BJ (cell line): ENCODE measurements at regions of chr13 and their contacts with region 1.

Region 1: DNA sequence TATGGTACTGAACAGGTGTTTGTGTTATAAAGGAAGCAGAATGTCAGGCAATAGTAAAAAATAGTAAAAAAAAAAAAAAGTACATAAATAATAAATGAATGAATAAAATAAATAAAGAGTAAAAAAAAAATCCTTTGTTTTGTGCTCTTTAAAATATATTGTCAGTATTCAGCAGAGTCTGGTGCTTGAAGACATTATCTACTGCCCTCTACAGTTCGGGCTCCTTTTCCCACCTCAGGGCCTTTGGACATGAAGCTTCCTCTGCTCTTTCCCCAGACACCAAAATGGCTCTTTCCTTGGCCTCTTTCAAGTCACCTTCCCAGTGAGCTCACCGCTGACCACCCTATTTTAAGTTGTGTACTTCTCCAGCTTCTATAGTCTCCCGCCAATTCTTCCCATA is 137.5 kb downstream of the TNFRSF19 start:
- DNase-seq: no peak
- H3K4me3 ChIP-seq: no peak overlapping the region
- H3K27me3 ChIP-seq: no peaks in the 10 kb centered on the region
- CTCF ChIP-seq: peak; percentile 43

Region 2: DNA sequence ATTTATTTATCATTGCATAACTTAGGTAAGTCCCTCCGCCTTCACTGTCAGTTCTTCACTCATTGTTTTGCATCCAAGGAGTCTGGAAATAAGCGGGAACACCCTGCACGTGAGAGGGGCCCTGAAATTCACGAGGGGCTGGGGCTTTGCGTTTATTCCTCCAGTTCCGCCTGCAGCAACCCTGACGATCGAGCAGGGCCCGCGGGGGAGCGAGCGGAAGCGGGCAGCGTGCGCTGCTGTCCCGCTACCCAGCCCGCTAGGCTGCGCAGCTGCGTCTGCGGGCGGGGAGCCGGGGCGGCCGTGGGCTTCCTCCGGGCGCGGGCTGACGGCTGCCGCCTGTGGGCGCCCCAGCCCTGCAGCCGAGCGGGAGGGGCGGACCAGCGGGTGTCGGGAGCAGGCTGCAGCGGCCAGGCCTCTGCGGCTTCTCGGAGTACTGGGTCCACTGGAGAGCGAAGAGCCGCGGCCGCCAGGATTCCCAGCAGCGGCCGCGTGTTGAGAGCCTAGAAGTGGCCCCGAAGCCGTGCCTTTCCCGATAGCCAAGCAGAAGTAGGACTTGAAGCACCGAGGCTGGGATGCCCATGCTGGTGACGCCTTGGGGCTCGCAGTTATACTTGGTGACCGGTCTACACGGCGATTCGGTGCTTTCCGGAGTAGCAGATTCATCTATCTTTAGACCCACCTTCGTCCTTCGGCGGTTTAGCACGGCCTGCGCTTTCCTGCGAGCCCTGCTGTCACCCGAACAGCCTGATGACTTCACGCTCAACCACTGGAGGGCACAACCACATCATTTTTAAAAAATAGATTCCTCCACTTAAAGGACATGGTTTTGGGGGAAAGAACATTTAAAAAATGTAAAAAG is 241.3 kb before region 1 on chr13:
- CTCF ChIA-PET with region 1: interaction called, 16 read pairs
- POLR2A ChIA-PET with region 1: no interaction called
- DNase-seq: no peak
- H3K4me3 ChIP-seq: peak overlapping the region; percentile 35
- H3K27me3 ChIP-seq: no peaks in the 10 kb centered on the region
- CTCF ChIP-seq: peak; percentile 50

Region 3: GRCh38 chr13:23477101-23477500 is 230.6 kb before region 1 on chr13:
- CTCF ChIA-PET with region 1: no interaction called
- POLR2A ChIA-PET with region 1: no interaction called
- DNase-seq: no peak
- H3K4me3 ChIP-seq: no peak overlapping the region
- H3K27me3 ChIP-seq: no peaks in the 10 kb centered on the region
- CTCF ChIP-seq: no peak

Region 4: GRCh38 chr13:23695711-23696464 is 11.8 kb before region 1 on chr13:
- CTCF ChIA-PET with region 1: no interaction called
- POLR2A ChIA-PET with region 1: no interaction called
- DNase-seq: no peak
- H3K4me3 ChIP-seq: no peak overlapping the region
- H3K27me3 ChIP-seq: no peaks in the 10 kb centered on the region
- CTCF ChIP-seq: no peak

Region 5: GRCh38 chr13:23876265-23876664 is 168.6 kb after region 1 on chr13:
- CTCF ChIA-PET with region 1: no interaction called
- POLR2A ChIA-PET with region 1: no interaction called
- DNase-seq: no peak
- H3K4me3 ChIP-seq: no peak overlapping the region
- H3K27me3 ChIP-seq: no peaks in the 10 kb centered on the region
- CTCF ChIP-seq: peak; percentile 50

Region 6: DNA sequence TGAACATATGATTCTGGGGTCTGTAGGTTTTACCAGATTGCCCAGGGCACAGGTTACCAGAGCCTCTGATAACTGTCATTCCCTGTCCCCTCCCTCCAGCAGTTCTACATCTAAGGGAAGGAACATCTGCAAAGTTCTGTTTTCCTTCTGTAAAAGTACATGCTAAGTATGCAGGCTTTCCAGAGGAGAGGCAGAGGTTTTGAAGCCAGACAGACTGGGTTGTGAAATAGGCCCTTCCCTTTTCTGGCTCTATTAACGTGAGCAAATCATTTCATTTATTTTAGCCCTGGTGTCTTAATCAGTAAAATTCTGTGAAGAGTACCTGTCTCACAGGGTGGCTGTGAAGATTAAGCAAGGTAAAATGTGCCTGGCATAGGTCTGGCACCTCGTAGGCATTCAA is 535.6 kb after region 1 on chr13:
- CTCF ChIA-PET with region 1: no interaction called
- POLR2A ChIA-PET with region 1: no interaction called
- DNase-seq: no peak
- H3K4me3 ChIP-seq: no peak overlapping the region
- H3K27me3 ChIP-seq: no peaks in the 10 kb centered on the region
- CTCF ChIP-seq: no peak